Naive thymus-derived CD4-positive, alpha-beta T cell (primary cell): ENCODE measurements at regions of chr6 and their contacts with region 1.

Region 1: GRCh38 chr6:26607434-26608230 is 10.9 kb downstream of the ABT1 start:
- DNase-seq: peak in 8 of 9 donors; percentile 37 to 75 (median 70)
- ATAC-seq: peak; percentile 95
- H3K4me3 ChIP-seq: peak overlapping the region; percentile 46
- H3K4me3 Mint-ChIP-seq: peak overlapping the region; percentile 19 to 79 (median 56)
- H3K27ac ChIP-seq: no peak overlapping the region
- H3K27ac Mint-ChIP-seq: peak overlapping the region in 7 of 9 donors; percentile 22 to 68 (median 55)
- H3K4me1 ChIP-seq: no peaks in the 10 kb centered on the region
- H3K4me1 Mint-ChIP-seq: peaks cover 6 to 14% (median 10%) of the 10 kb centered on the region in 7 donors
- H3K27me3 ChIP-seq: no peaks in the 10 kb centered on the region
- H3K27me3 Mint-ChIP-seq: peaks cover 0 to 20% (median 5%) of the 10 kb centered on the region in 5 donors

Region 2: GRCh38 chr6:25866011-25866410 is 741.6 kb before region 1 on chr6:
- CTCF ChIA-PET with region 1: no interaction called
- POLR2A ChIA-PET with region 1: no interaction called
- intact Hi-C with region 1: no loop called
- DNase-seq: peak in 7 of 9 donors; percentile 60 to 82 (median 72)
- ATAC-seq: peak; percentile 95
- H3K4me3 ChIP-seq: no peak overlapping the region
- H3K4me3 Mint-ChIP-seq: peak overlapping the region in 7 of 10 donors; percentile 23 to 70 (median 54)
- H3K27ac ChIP-seq: no peak overlapping the region
- H3K27ac Mint-ChIP-seq: peak overlapping the region in 8 of 9 donors; percentile 6 to 91 (median 80)
- H3K4me1 ChIP-seq: peaks cover 13 to 20% of the 10 kb centered on the region in 2 donors
- H3K4me1 Mint-ChIP-seq: peaks cover 8 to 34% (median 31%) of the 10 kb centered on the region in 7 donors
- H3K27me3 ChIP-seq: no peaks in the 10 kb centered on the region
- H3K27me3 Mint-ChIP-seq: peaks cover 0 to 7% (median 0%) of the 10 kb centered on the region in 5 donors

Region 3: DNA sequence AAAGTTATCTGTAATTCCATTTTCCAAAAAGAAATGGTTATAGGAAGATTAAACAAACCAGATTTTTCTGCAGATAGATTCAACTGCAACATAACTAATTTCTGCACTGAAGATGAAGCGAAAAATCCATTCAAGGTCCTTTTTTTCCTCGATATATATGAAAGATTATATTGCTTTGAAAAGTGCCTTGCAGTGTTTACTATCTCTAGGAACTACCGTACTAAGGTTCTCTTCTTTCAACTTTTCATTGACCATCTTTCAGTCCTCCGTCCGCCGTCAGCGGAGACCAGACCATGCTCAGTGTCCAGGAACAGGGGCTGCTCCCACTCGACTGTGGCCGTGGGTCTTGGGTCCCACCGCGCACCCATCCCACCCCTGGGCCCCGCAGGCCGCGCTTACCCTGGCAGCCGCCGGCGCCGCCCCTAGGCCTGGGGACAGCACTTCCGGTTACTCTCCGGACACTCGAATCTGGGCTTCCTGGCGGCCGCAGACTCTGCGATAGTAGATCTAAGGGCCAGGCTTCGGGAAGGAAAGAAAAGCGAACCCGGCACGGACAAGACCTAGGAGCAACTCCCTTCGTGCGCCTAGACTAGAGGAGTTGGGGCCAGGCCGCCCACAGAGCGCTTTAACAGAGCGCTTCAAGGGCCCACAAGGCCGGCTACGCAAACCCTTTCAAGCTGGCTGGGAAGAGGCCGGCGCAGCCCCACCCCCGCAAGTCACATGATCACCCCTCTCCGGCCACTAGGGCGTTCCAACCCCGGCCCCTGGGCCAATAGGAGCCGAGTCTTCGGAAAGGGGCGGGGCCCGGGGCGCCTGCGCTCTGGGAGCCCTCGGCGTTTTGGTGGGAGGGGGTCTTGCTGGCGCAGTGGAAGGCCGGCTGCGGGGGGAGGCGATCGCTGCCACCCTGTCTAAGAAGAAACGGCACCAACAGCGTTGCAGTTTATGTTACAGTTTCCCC is 51.7 kb after region 1 on chr6 and contains the start of gene ZNF322:
- CTCF ChIA-PET with region 1: interaction called, 3 read pairs
- POLR2A ChIA-PET with region 1: no interaction called
- intact Hi-C with region 1: loop called (anchors 1 to 2 kb)
- DNase-seq: peak; percentile 69 to 92 (median 71)
- ATAC-seq: peak; percentile 99
- H3K4me3 ChIP-seq: peak within 1 kb of the TSS; percentile 75
- H3K4me3 Mint-ChIP-seq: peak within 1 kb of the TSS; percentile 77 to 93 (median 88)
- H3K27ac ChIP-seq: peak within 1 kb of the TSS; percentile 65
- H3K27ac Mint-ChIP-seq: peak within 1 kb of the TSS in 8 of 9 donors; percentile 19 to 85 (median 65)
- H3K4me1 ChIP-seq: peaks cover 11 to 13% of the 10 kb centered on the region in 2 donors
- H3K4me1 Mint-ChIP-seq: peaks cover 23 to 49% (median 38%) of the 10 kb centered on the region in 7 donors
- H3K27me3 ChIP-seq: no peaks in the 10 kb centered on the region
- H3K27me3 Mint-ChIP-seq: peaks cover 18 to 29% (median 23%) of the 10 kb centered on the region in 5 donors
- total RNA-seq, gene ZNF322: 5.3 to 23.1 (median 15.4) TPM

Region 4: GRCh38 chr6:27078734-27079357 is 471.2 kb after region 1 on chr6:
- CTCF ChIA-PET with region 1: interaction called, 15 read pairs
- POLR2A ChIA-PET with region 1: no interaction called
- intact Hi-C with region 1: loop called (anchors 1 kb)
- DNase-seq: peak in 7 of 9 donors; percentile 23 to 57 (median 39)
- ATAC-seq: peak; percentile 70
- H3K4me3 ChIP-seq: peak overlapping the region; percentile 45
- H3K4me3 Mint-ChIP-seq: peak overlapping the region; percentile 16 to 88 (median 74)
- H3K27ac ChIP-seq: no peak overlapping the region
- H3K27ac Mint-ChIP-seq: no peak overlapping the region
- H3K4me1 ChIP-seq: no peaks in the 10 kb centered on the region
- H3K4me1 Mint-ChIP-seq: peaks cover 0 to 8% (median 7%) of the 10 kb centered on the region in 7 donors
- H3K27me3 ChIP-seq: peaks cover 0 to 7% of the 10 kb centered on the region in 2 donors
- H3K27me3 Mint-ChIP-seq: peaks cover 34 to 71% (median 56%) of the 10 kb centered on the region in 5 donors

Region 5: GRCh38 chr6:27126815-27127537 is 519.3 kb after region 1 on chr6:
- CTCF ChIA-PET with region 1: no interaction called
- POLR2A ChIA-PET with region 1: no interaction called
- intact Hi-C with region 1: loop called in 1 of 2 experiments (anchors 1 kb)
- DNase-seq: peak; percentile 46 to 82 (median 77)
- ATAC-seq: peak; percentile 89
- H3K4me3 ChIP-seq: peak overlapping the region; percentile 33
- H3K4me3 Mint-ChIP-seq: peak overlapping the region; percentile 35 to 90 (median 77)
- H3K27ac ChIP-seq: no peak overlapping the region
- H3K27ac Mint-ChIP-seq: peak overlapping the region; percentile 41 to 93 (median 82)
- H3K4me1 ChIP-seq: peaks cover 4 to 6% of the 10 kb centered on the region in 2 donors
- H3K4me1 Mint-ChIP-seq: peaks cover 6 to 51% (median 15%) of the 10 kb centered on the region in 7 donors
- H3K27me3 ChIP-seq: no peaks in the 10 kb centered on the region
- H3K27me3 Mint-ChIP-seq: no peaks in the 10 kb centered on the region